HCT116 (cell line): ENCODE measurements at regions of chr6 and their contacts with region 1.

Region 1: GRCh38 chr6:31087494-31088089 is 24.8 kb downstream of the C6orf15 start:
- DNase-seq: peak; percentile 72
- ATAC-seq: peak; percentile 88
- H3K4me3 ChIP-seq: no peak overlapping the region
- H3K27ac ChIP-seq: no peak overlapping the region
- H3K4me1 ChIP-seq: peaks cover 15 to 26% of the 10 kb centered on the region in 2 experiments
- H3K27me3 ChIP-seq: no peaks in the 10 kb centered on the region
- CTCF ChIP-seq: peak; percentile 66 to 75 (median 71); a peak in 5 of 6 replicates
- POLR2A ChIP-seq: no peak
- RAD21 ChIP-seq: peak; percentile 80

Region 2: GRCh38 chr6:30411515-30412207 is 675.9 kb before region 1 on chr6:
- CTCF ChIA-PET with region 1: no interaction called
- POLR2A ChIA-PET with region 1: no interaction called
- RAD21 ChIA-PET with region 1: no interaction called
- intact Hi-C with region 1: no loop called
- DNase-seq: peak; percentile 61
- ATAC-seq: peak; percentile 97
- H3K4me3 ChIP-seq: no peak overlapping the region; a peak in 1 of 4 replicates
- H3K27ac ChIP-seq: no peak overlapping the region
- H3K4me1 ChIP-seq: peaks cover 0 to 5% of the 10 kb centered on the region in 2 experiments; a peak in 1 of 4 replicates
- H3K27me3 ChIP-seq: no peaks in the 10 kb centered on the region
- CTCF ChIP-seq: peak; percentile 74 to 90 (median 76); a peak in 5 of 6 replicates
- POLR2A ChIP-seq: no peak
- RAD21 ChIP-seq: peak; percentile 67

Region 3: GRCh38 chr6:30678964-30679726 is 408.4 kb before region 1 on chr6:
- CTCF ChIA-PET with region 1: interaction called, 8 read pairs
- POLR2A ChIA-PET with region 1: no interaction called
- RAD21 ChIA-PET with region 1: no interaction called
- intact Hi-C with region 1: loop called (anchors 2 kb)
- DNase-seq: no peak
- ATAC-seq: peak; percentile 85
- H3K4me3 ChIP-seq: no peak overlapping the region
- H3K27ac ChIP-seq: 0 out of 2 replicates have a peak overlapping the region, but pooled peaks have one; percentile 8
- H3K4me1 ChIP-seq: peaks cover 22 to 34% of the 10 kb centered on the region in 2 experiments
- H3K27me3 ChIP-seq: no peaks in the 10 kb centered on the region
- CTCF ChIP-seq: peak in 2 of 3 experiments; percentile 96; a peak in 4 of 6 replicates
- POLR2A ChIP-seq: no peak
- RAD21 ChIP-seq: no peak

Region 4: DNA sequence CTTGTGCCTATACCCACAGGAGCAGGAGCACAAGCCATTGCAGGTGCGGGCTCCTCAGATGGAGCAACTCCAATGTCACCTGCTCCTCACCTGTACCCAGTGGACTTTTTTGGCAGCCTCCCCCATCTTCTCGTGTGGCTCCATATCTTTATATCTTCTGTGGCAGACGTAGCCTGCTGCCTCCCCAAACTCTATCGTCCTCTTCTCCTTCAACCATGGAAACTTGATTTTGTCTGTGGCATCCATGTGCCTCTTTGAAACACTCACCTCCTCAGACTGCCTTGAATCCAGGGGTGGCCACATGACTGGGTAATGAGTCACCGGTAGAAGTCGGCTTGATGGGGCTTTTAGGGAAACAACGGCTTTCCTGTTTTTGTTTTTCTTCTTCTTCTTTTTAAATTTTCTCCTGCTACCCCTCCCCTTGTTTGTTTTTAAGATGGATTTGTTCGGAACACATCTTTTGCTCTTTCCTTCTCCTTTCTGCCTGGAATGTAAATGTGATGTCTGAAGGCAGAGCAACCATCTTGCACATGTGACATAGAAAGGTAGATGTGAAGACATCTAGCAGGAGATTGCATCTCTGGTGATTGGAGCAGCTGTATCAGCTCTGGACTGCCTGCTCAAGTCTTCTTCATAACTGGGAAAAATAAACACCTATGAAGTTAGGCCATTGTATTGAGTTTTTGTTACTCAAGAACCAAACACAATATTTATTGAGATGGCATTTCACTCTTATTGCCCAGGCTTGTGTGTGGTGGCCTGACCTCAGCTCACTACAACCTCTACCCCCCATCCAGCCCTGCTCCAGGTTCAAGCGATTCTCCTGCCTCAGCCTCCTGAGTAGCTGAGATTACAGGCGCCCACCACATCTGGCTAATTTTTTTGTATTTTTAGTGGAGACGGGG is 273.2 kb before region 1 on chr6:
- CTCF ChIA-PET with region 1: interaction called, 7 read pairs
- POLR2A ChIA-PET with region 1: interaction called, 10 read pairs
- RAD21 ChIA-PET with region 1: no interaction called
- intact Hi-C with region 1: no loop called
- DNase-seq: peak; percentile 88
- ATAC-seq: peak; percentile 54
- H3K4me3 ChIP-seq: peak overlapping the region in 1 of 2 experiments; percentile 32; a peak in 2 of 4 replicates
- H3K27ac ChIP-seq: peak overlapping the region; percentile 97
- H3K4me1 ChIP-seq: peaks cover 76 to 88% of the 10 kb centered on the region in 2 experiments
- H3K27me3 ChIP-seq: no peaks in the 10 kb centered on the region
- CTCF ChIP-seq: no peak
- POLR2A ChIP-seq: no peak
- RAD21 ChIP-seq: no peak

Region 5: DNA sequence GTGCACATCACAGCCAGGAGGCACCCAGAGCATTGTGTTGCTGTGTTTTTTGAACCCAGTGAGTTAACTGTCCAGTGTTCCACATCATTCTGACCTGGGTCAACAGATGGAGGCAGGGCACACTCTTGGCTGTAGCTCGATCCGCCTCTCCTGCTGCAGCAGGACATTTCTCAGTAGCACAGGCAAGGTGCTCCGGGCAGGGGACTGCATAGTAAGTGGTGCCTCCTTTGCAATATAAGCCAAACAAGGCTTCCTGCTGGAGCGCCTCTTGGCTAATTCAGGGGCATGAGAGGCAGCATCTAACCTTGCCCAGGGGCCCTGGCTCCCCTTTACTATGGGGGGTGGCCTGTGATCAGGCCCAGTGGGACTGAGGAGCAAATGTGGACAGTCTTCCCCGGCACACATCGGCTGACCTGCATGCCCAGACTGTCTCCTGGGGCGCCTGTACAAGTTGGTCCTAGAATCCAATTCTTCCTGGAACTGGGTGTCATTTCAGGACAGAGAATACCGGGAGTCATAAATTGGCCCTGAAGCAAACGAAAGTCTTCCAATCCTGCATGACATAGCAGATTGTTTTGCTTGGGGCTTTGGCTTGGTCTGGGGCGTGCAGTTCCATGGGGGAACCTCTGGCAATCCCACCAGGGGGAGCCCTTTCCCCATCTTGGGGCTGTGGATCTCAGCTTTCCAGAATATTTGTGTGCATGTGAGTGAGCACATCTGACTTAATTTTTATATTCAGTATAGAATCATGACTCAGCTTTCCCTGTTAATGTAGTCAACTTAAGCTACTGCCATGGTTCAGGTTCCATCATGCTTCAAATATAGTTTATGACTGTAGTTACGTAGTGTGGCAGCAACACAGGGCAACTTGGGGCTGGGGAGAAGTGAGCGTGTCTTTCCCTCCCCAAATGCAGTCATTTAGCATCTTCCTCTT is 259.3 kb before region 1 on chr6:
- CTCF ChIA-PET with region 1: interaction called, 33 read pairs
- POLR2A ChIA-PET with region 1: interaction called, 3 read pairs
- RAD21 ChIA-PET with region 1: interaction called in 1 of 2 experiments, 3 read pairs
- intact Hi-C with region 1: loop called (anchors 2 kb)
- DNase-seq: no peak
- ATAC-seq: peak; percentile 87
- H3K4me3 ChIP-seq: no peak overlapping the region
- H3K27ac ChIP-seq: peak overlapping the region; percentile 22
- H3K4me1 ChIP-seq: peaks cover 23 to 47% of the 10 kb centered on the region in 2 experiments
- H3K27me3 ChIP-seq: no peaks in the 10 kb centered on the region
- CTCF ChIP-seq: peak; percentile 91 to 96 (median 95)
- POLR2A ChIP-seq: no peak
- RAD21 ChIP-seq: peak; percentile 99

Region 6: DNA sequence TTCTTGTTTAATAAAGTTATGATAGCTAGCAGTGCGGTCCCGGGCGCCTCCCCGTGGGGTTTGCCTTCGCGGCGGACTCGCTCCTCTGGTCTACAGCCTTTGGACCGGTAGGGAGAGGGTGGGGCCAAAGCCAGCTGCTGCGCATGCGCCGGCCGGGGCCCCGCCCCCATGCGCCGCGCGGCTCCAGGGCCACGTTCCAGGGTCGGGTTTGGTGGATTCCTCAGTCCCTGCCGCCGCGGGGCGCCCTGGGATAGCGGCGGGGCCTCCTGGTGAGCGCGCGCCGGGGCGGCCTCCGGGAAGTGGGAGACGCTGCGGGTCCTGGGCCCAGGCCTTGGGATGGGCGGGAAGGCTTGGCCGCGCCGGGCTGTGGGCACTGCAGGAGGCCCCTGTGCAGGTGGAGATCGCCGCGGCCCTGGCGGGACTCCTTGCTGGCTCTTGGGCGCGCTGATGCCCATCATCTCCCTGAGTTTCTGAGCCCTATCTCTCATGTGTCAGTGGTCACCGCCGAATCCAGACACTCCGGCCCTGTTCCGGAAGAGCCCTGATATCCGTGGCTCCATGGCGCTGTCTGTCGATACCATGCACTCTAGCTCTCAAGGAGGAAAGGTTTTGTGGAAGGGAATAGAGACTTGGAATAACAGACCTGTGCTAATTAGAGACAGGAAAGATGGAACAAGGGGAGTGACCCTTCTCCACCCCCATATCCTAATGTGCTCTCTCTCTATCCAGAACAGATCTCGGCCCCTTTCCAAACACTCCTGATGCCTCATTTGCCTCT is 173.3 kb before region 1 on chr6 and contains the start of gene VARS2:
- CTCF ChIA-PET with region 1: interaction called, 60 read pairs
- POLR2A ChIA-PET with region 1: interaction called, 3 read pairs
- RAD21 ChIA-PET with region 1: interaction called, 3 read pairs
- intact Hi-C with region 1: loop called (anchors 2 kb)
- DNase-seq: peak; percentile 80
- ATAC-seq: peak; percentile 92
- H3K4me3 ChIP-seq: peak within 1 kb of the TSS; percentile 58 to 72
- H3K27ac ChIP-seq: peak within 1 kb of the TSS; percentile 71
- H3K4me1 ChIP-seq: peaks cover 9 to 26% of the 10 kb centered on the region in 2 experiments; a peak in 3 of 4 replicates
- H3K27me3 ChIP-seq: no peaks in the 10 kb centered on the region
- CTCF ChIP-seq: peak in 1 of 3 experiments; percentile 22; a peak in 2 of 6 replicates
- POLR2A ChIP-seq: peak; percentile 58
- RAD21 ChIP-seq: no peak
- total RNA-seq, gene VARS2: 39.8 TPM

Region 7: DNA sequence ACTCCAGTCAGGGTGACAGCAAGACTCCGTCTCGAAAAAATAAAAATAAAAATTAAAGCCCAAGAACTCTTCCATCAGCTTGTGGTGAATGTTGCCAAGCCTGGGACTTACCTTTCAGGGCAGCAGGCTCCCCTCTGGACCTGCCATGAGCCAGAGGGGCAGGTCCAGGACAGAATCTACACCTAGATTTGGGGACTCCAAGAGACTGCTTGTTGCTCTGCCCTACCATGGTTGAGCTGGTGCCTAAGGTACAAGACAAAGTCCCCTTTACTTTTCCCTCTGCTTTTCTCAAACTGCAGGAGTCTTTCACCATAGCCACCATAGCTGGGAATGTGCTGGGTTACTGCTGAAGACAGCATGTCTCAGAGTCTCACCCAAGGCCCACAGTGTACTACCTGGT is 15.5 kb after region 1 on chr6:
- CTCF ChIA-PET with region 1: interaction called, 13 read pairs
- POLR2A ChIA-PET with region 1: no interaction called
- RAD21 ChIA-PET with region 1: no interaction called
- intact Hi-C with region 1: no loop called
- DNase-seq: no peak
- ATAC-seq: no peak
- H3K4me3 ChIP-seq: no peak overlapping the region
- H3K27ac ChIP-seq: no peak overlapping the region
- H3K4me1 ChIP-seq: peaks cover 3 to 12% of the 10 kb centered on the region in 2 experiments; a peak in 3 of 4 replicates
- H3K27me3 ChIP-seq: no peaks in the 10 kb centered on the region
- CTCF ChIP-seq: no peak
- POLR2A ChIP-seq: no peak
- RAD21 ChIP-seq: no peak

Region 8: GRCh38 chr6:31197559-31198305 is 110.1 kb after region 1 on chr6:
- CTCF ChIA-PET with region 1: interaction called, 6 read pairs
- POLR2A ChIA-PET with region 1: no interaction called
- RAD21 ChIA-PET with region 1: no interaction called
- intact Hi-C with region 1: loop called (anchors 5 kb)
- DNase-seq: peak; percentile 66
- ATAC-seq: peak; percentile 81
- H3K4me3 ChIP-seq: peak overlapping the region; percentile 79 to 88
- H3K27ac ChIP-seq: peak overlapping the region; percentile 95
- H3K4me1 ChIP-seq: peaks cover 12 to 30% of the 10 kb centered on the region in 2 experiments
- H3K27me3 ChIP-seq: no peaks in the 10 kb centered on the region
- CTCF ChIP-seq: no peak
- POLR2A ChIP-seq: peak; percentile 38
- RAD21 ChIP-seq: 0 out of 2 replicates have a peak, but pooled peaks have one; percentile 5

Region 9: DNA sequence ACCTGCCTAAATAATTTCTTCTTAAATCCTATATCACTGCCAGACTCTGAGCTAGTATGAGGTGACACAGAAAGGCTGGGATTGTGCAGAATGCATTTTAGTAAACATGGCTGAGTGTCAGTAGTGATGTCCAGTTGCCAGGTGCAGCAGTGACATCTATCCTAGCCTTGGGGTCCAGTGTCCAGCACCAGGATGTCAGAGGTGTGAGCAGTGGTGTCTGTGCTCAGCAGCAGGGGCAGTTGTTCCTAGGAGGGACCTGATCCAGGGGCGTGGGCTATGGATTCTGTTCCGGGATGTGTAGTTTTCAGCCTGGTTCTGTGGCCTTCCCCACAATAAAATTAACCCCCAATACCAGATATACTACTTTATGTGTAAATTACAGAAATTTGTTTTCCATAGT is 178.3 kb after region 1 on chr6:
- CTCF ChIA-PET with region 1: no interaction called
- POLR2A ChIA-PET with region 1: no interaction called
- RAD21 ChIA-PET with region 1: no interaction called
- intact Hi-C with region 1: no loop called
- DNase-seq: no peak
- ATAC-seq: no peak
- H3K4me3 ChIP-seq: no peak overlapping the region
- H3K27ac ChIP-seq: no peak overlapping the region
- H3K4me1 ChIP-seq: peaks cover 3 to 6% of the 10 kb centered on the region in 2 experiments; a peak in 2 of 4 replicates
- H3K27me3 ChIP-seq: no peaks in the 10 kb centered on the region
- CTCF ChIP-seq: no peak
- POLR2A ChIP-seq: no peak
- RAD21 ChIP-seq: no peak

Region 10: GRCh38 chr6:31665501-31666336 is 578.1 kb after region 1 on chr6 and contains the start of gene CSNK2B:
- CTCF ChIA-PET with region 1: no interaction called
- POLR2A ChIA-PET with region 1: no interaction called
- RAD21 ChIA-PET with region 1: no interaction called
- intact Hi-C with region 1: no loop called
- DNase-seq: peak; percentile 96
- ATAC-seq: peak; percentile 84
- H3K4me3 ChIP-seq: peak within 1 kb of the TSS; percentile 97 to 99
- H3K27ac ChIP-seq: peak within 1 kb of the TSS; percentile 90
- H3K4me1 ChIP-seq: peaks cover 14 to 34% of the 10 kb centered on the region in 2 experiments; a peak in 3 of 4 replicates
- H3K27me3 ChIP-seq: no peaks in the 10 kb centered on the region
- CTCF ChIP-seq: no peak
- POLR2A ChIP-seq: peak; percentile 89
- RAD21 ChIP-seq: no peak
- total RNA-seq, gene CSNK2B: 210 TPM